ENCODE measurements at regions of chr15 and their contacts with region 1.

Region 1: DNA sequence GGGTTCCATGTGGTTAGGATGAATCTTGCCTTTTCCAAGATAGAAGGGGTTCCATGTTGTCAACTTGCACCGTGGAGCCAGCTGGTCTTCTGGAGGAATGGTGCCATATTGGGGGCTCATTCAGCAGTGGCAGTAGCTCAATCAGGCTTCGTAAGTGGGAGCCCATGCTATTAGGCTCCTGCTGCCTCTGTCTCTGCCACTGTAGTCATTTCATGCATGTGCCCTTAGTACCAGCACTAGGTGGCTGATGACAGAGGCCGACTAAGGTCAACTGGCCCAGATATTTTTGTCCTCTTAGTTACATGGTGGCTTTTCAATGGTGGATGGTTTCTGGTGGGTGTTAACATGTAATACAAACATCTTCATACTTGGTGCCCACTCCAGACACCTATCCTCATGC is 4.6 kb upstream of the ETFA start:
- DNase-seq: no peak
- H3K4me3 ChIP-seq: no peak overlapping the region
- H3K27ac ChIP-seq: no peak overlapping the region
- H3K4me1 ChIP-seq: no peaks in the 10 kb centered on the region
- H3K27me3 ChIP-seq: no peaks in the 10 kb centered on the region
- CTCF ChIP-seq: no peak
- POLR2A ChIP-seq: no peak

Region 2: GRCh38 chr15:76163475-76163881 is 152.4 kb before region 1 on chr15:
- intact Hi-C with region 1: no loop called
- DNase-seq: no peak
- H3K4me3 ChIP-seq: no peak overlapping the region
- H3K27ac ChIP-seq: no peak overlapping the region
- H3K4me1 ChIP-seq: peaks cover 0 to 4% of the 10 kb centered on the region in 2 donors
- H3K27me3 ChIP-seq: no peaks in the 10 kb centered on the region
- CTCF ChIP-seq: no peak
- POLR2A ChIP-seq: no peak

Region 3: GRCh38 chr15:76333720-76334437 is 18.0 kb after region 1 on chr15:
- intact Hi-C with region 1: loop called (anchors 1 kb)
- DNase-seq: no peak
- H3K4me3 ChIP-seq: no peak overlapping the region
- H3K27ac ChIP-seq: no peak overlapping the region
- H3K4me1 ChIP-seq: no peaks in the 10 kb centered on the region
- H3K27me3 ChIP-seq: peaks cover under 1 to 59% of the 10 kb centered on the region in 2 donors
- CTCF ChIP-seq: no peak
- POLR2A ChIP-seq: no peak

Region 4: DNA sequence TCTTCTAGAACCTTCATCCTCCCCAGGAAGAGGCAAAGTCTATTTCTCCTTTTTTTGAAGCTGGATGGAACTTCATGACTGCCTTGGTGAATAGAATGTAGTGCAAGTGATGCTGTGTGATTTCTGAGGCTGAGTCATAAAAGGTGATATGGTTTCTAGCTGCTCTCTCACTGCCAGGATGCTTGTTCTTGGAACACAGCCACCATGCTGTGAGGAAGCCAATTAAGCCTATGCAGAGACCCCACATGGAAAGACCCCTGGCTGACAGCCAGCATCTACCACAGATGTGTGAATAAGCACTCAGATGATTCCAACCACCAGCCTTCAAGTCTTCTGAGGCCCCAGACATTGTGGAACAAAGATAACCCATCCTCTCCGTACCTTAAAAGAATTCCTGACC is 77.7 kb after region 1 on chr15:
- intact Hi-C with region 1: no loop called
- DNase-seq: no peak
- H3K4me3 ChIP-seq: no peak overlapping the region
- H3K27ac ChIP-seq: no peak overlapping the region
- H3K4me1 ChIP-seq: no peaks in the 10 kb centered on the region
- H3K27me3 ChIP-seq: no peaks in the 10 kb centered on the region
- CTCF ChIP-seq: no peak
- POLR2A ChIP-seq: no peak

Measured in breast epithelium (tissue), 4 donors.